ENCODE measurements at regions of chr2 and their contacts with region 1.

Region 1: DNA sequence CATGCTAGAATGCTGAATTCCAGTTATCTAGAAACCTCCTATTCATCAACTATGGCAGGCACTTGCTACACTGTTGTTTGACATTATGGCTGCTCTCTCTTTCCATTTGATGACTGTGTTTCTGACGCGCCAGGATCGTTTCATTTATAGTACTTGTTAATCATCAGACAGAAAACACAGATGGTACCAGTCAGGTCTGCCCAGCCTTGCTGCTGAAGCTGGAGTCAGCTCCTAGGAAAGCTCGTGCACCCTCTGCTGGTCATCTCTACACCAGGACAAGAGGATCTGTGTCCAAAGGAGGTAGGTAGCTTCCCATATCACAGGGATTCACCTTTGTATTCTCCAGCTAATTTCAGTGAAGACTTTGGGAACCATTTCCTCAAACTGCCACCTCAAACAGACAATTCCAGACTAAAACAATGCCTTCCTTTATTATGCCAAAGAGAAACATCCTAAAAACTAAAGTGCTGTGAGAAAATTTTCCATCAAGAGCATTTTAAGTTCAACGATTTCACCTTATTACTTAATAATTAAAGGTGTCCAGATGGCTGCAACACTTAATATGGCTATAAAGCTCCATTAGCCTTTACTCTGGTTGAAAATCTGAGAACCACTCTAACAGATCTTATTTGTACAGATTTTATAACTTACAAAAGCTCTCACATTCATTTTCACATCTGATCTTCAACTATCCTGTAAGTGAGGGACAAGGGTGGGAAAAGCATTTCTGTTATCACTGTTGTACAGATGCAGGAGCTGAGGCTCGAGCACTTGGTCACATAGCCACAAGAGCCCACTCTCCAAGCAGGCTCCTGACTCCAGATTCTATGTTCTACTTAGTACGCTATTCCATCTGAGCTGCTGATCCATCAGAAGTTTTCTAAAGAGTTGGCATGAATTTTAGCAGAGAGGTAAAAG is 17.5 kb downstream of the METTL8 start:
- DNase-seq: peak; percentile 93
- H3K4me3 ChIP-seq: no peak overlapping the region
- H3K27ac ChIP-seq: peak overlapping the region in 3 of 4 donors; percentile 20 to 57 (median 54)
- H3K4me1 ChIP-seq: peaks cover 4 to 7% (median 5%) of the 10 kb centered on the region in 4 donors
- H3K27me3 ChIP-seq: no peaks in the 10 kb centered on the region
- CTCF ChIP-seq: peak; percentile 76 to 87 (median 82)
- EP300 ChIP-seq: no peak
- POLR2A ChIP-seq: no peak

Region 2: DNA sequence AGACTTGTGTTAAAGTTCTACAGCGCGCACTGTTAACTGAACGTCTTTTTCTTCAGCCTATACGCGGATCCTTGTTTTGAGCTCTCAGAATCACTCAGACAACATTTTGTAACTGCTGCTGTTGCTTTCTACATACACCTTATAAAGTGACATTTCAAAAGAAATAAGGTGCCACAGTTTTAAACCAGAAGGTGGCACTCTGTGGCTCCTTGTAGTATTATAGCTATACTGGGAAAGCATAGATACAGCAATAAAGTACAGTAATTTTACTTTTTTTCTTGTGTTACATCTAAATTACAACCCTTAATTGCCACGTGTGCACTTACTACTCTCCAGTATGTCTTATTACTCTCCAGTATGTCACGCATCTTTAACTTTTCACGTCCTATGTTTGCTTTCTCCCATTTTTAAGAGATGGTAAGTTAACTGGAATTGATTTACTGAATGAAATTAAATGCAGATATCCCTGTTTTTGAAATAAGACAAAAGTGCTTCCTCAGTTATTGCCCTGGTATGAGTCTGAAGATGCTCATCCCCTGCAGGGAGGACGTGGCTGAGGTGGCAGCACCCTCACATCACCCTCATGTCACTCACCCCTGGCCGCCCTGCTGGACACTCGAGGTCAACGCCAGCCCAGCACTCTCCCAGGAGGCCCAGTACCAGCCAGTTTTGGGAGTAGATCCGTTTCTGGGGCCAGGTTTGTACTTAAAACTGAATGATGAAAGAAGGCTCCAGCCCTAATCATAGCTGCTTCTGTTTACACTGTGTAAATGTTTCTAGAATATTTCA is 449.4 kb before region 1 on chr2:
- in situ Hi-C with region 1: loop called in 3 of 4 experiments (anchors 10 to 25 kb)
- intact Hi-C with region 1: no loop called
- DNase-seq: no peak
- H3K4me3 ChIP-seq: no peak overlapping the region
- H3K27ac ChIP-seq: no peak overlapping the region
- H3K4me1 ChIP-seq: no peaks in the 10 kb centered on the region
- H3K27me3 ChIP-seq: no peaks in the 10 kb centered on the region
- CTCF ChIP-seq: no peak
- EP300 ChIP-seq: no peak
- POLR2A ChIP-seq: no peak

Region 3: GRCh38 chr2:170973492-170974303 is 442.6 kb before region 1 on chr2:
- in situ Hi-C with region 1: loop called (anchors 5 to 25 kb)
- intact Hi-C with region 1: loop called (anchors 1 kb)
- DNase-seq: peak; percentile 91
- H3K4me3 ChIP-seq: peak overlapping the region; percentile 45 to 95 (median 71)
- H3K27ac ChIP-seq: peak overlapping the region; percentile 75 to 91 (median 86)
- H3K4me1 ChIP-seq: peaks cover 5 to 20% (median 11%) of the 10 kb centered on the region in 4 donors
- H3K27me3 ChIP-seq: no peaks in the 10 kb centered on the region
- CTCF ChIP-seq: peak; percentile 86 to 94 (median 93)
- EP300 ChIP-seq: no peak
- POLR2A ChIP-seq: peak; percentile 49

Region 4: DNA sequence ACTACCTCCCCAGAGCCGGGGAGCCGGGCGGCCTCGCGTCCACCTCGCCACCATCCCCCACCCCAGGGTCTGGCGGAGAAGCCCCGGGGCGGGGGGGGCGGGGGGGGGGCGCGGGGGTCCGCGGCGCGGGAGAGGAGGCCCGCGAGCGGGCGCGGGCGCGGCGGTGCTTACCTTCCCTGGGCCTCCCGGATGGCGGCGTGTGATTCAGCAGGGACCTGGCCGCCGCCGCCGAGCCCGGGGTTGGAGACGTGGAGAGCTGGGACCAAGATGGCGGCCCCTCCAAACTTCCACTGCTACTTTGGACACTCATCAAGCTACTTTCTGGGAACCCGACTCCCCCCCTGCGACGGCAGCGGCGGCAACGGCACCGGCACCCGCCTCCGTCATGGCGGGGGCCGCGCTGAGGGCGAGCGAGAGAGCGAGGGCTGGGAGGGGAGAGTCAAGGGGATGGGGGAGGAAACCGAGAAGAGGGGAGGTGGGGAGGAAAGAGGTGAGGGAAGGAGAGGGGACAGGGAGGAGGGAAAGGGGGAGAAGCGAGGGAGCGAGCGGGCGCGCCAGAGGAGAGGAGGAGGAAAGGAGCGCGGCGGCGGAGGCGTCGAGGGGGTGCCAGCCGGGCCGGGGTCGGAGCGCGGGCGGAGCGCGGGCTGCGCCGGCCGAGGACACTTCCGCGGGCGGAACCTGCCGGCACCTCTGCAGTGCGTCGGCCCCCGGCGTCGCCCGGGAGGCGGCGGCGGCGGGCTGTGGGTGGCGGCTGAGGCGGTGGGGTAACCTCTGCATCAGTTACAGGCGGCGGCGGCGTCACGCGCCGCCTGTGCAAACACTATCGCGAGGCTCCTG is 255.9 kb before region 1 on chr2 and contains the start of gene TLK1:
- in situ Hi-C with region 1: loop called (anchors 10 to 25 kb)
- intact Hi-C with region 1: no loop called
- DNase-seq: peak; percentile 71
- H3K4me3 ChIP-seq: peak within 1 kb of the TSS; percentile 70 to 91 (median 84)
- H3K27ac ChIP-seq: peak within 1 kb of the TSS; percentile 93 to 98 (median 98)
- H3K4me1 ChIP-seq: peaks cover 3 to 43% (median 22%) of the 10 kb centered on the region in 4 donors
- H3K27me3 ChIP-seq: no peaks in the 10 kb centered on the region
- CTCF ChIP-seq: peak in 1 of 5 experiments; percentile 7
- EP300 ChIP-seq: no peak
- POLR2A ChIP-seq: peak; percentile 44
- total RNA-seq, gene TLK1: 39.6 to 76.3 (median 53.2) TPM

Region 5: DNA sequence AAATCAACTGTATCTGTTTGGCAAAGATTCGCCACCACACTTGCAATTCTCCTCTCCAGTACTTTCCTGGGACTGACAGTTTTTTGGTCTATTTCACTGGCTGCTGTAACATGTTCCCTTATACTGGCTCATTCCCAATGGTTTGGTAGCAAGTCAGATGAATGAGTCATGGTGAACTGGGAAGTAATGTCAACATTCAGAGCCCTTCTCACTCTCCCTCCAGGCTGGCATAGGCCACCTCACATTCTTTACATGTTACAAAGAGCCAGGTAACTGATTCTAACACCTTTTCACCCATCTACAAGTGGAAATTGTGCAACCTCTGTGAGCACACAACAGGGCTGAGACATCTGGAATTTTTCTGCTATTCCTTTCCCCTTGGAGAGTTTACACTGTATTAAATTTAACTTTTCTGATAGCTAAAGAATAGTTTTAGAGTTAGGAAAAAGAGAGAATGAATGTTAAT is 144.3 kb before region 1 on chr2:
- in situ Hi-C with region 1: no loop called
- intact Hi-C with region 1: loop called (anchors 10 kb)
- DNase-seq: no peak
- H3K4me3 ChIP-seq: no peak overlapping the region
- H3K27ac ChIP-seq: peak overlapping the region in 3 of 4 donors; percentile 8 to 32 (median 27)
- H3K4me1 ChIP-seq: peaks cover 0 to 5% (median 0%) of the 10 kb centered on the region in 4 donors
- H3K27me3 ChIP-seq: no peaks in the 10 kb centered on the region
- CTCF ChIP-seq: no peak
- EP300 ChIP-seq: no peak
- POLR2A ChIP-seq: no peak

Region 6: GRCh38 chr2:171460537-171460936 is 44.3 kb after region 1 on chr2:
- in situ Hi-C with region 1: no loop called
- intact Hi-C with region 1: no loop called
- DNase-seq: no peak
- H3K4me3 ChIP-seq: no peak overlapping the region
- H3K27ac ChIP-seq: no peak overlapping the region
- H3K4me1 ChIP-seq: no peaks in the 10 kb centered on the region
- H3K27me3 ChIP-seq: no peaks in the 10 kb centered on the region
- CTCF ChIP-seq: no peak
- EP300 ChIP-seq: no peak
- POLR2A ChIP-seq: no peak